ENCODE measurements at regions of chr18 and their contacts with region 1.

Region 1: GRCh38 chr18:35040988-35041814 is at the start of gene MAPRE2:
- DNase-seq: peak; percentile 95
- H3K4me3 ChIP-seq: peak within 1 kb of the TSS; percentile 99
- H3K27ac ChIP-seq: peak within 1 kb of the TSS; percentile 68
- H3K27me3 ChIP-seq: no peaks in the 10 kb centered on the region
- CTCF ChIP-seq: peak; percentile 10; the same call in 1 of the 2 replicates
- polyA plus RNA-seq, gene MAPRE2: 41.1 and 48.8 TPM in 2 replicates

Region 2: GRCh38 chr18:35029770-35030169 is 11.4 kb before region 1 on chr18:
- CTCF ChIA-PET with region 1: interaction called, 5 read pairs
- POLR2A ChIA-PET with region 1: interaction called, 21 read pairs
- DNase-seq: no peak
- H3K4me3 ChIP-seq: no peak overlapping the region
- H3K27ac ChIP-seq: no peak overlapping the region
- H3K27me3 ChIP-seq: no peaks in the 10 kb centered on the region
- CTCF ChIP-seq: peak; percentile 18; the same call in 1 of the 2 replicates